ENCODE measurements at regions of chr20 and their contacts with region 1.

Region 1: GRCh38 chr20:32091888-32092346 is 17.6 kb upstream of the TM9SF4 start:
- DNase-seq: peak; percentile 58 to 84 (median 69)
- ATAC-seq: peak; percentile 99
- H3K4me3 ChIP-seq: no peak overlapping the region
- H3K4me3 Mint-ChIP-seq: no peak overlapping the region
- H3K27ac ChIP-seq: no peak overlapping the region
- H3K27ac Mint-ChIP-seq: no peak overlapping the region
- H3K4me1 ChIP-seq: peaks cover 4% of the 10 kb centered on the region
- H3K4me1 Mint-ChIP-seq: no peaks in the 10 kb centered on the region
- H3K27me3 ChIP-seq: no peaks in the 10 kb centered on the region
- H3K27me3 Mint-ChIP-seq: peaks cover 10% of the 10 kb centered on the region
- CTCF ChIP-seq: peak; percentile 89

Region 2: GRCh38 chr20:31822421-31823330 is 269.2 kb before region 1 on chr20:
- CTCF ChIA-PET with region 1: interaction called, 8 read pairs
- POLR2A ChIA-PET with region 1: no interaction called
- intact Hi-C with region 1: loop called (anchors 1 to 2 kb)
- DNase-seq: peak; percentile 60 to 86 (median 68)
- ATAC-seq: peak; percentile 86
- H3K4me3 ChIP-seq: peak overlapping the region; percentile 5
- H3K4me3 Mint-ChIP-seq: no peak overlapping the region
- H3K27ac ChIP-seq: no peak overlapping the region
- H3K27ac Mint-ChIP-seq: no peak overlapping the region
- H3K4me1 ChIP-seq: peaks cover 10% of the 10 kb centered on the region
- H3K4me1 Mint-ChIP-seq: no peaks in the 10 kb centered on the region
- H3K27me3 ChIP-seq: peaks cover 0 to 3% of the 10 kb centered on the region in 2 experiments
- H3K27me3 Mint-ChIP-seq: no peaks in the 10 kb centered on the region
- CTCF ChIP-seq: peak; percentile 99

Region 3: GRCh38 chr20:31849455-31849925 is 242.4 kb before region 1 on chr20:
- CTCF ChIA-PET with region 1: no interaction called
- POLR2A ChIA-PET with region 1: no interaction called
- intact Hi-C with region 1: loop called (anchors 1 to 10 kb)
- DNase-seq: no peak
- ATAC-seq: no peak
- H3K4me3 ChIP-seq: no peak overlapping the region
- H3K4me3 Mint-ChIP-seq: no peak overlapping the region
- H3K27ac ChIP-seq: no peak overlapping the region
- H3K27ac Mint-ChIP-seq: no peak overlapping the region
- H3K4me1 ChIP-seq: peaks cover 7% of the 10 kb centered on the region
- H3K4me1 Mint-ChIP-seq: no peaks in the 10 kb centered on the region
- H3K27me3 ChIP-seq: peaks cover 8 to 14% of the 10 kb centered on the region in 2 experiments
- H3K27me3 Mint-ChIP-seq: peaks cover 32% of the 10 kb centered on the region
- CTCF ChIP-seq: no peak

Region 4: DNA sequence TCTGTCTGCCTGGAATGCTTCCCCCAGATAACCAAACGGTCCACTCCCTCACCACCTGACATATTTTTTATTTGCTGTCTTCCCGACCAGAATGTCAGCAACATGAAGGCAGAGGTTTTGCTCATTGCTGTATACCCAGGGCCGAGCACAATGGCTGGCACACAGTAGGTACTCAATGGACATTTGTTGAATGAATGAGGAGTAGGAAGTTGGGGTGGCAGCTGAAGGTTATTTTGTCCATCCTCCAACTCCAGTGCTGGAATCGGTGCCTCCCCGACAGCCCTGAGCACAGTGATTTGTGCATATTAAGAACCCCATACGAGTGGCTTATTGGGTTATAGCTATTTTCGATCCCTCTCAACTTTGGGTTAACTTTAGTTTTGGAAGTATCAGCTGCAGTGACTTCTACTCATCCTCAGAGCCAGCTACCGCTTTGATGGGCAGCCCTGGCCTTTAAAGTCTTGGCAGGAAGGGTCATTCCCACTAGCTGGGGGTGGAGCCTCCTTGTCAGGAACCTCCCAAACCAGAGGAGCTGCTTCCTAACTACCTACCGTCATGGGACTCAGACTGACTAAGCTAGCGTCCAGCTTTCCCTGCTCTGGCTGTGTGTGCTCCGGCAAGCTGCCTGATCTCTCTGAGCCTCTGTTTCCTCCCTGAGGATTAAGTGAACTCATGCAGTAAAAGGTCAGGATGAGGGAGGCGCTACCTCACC is 231.8 kb before region 1 on chr20:
- CTCF ChIA-PET with region 1: no interaction called
- POLR2A ChIA-PET with region 1: no interaction called
- intact Hi-C with region 1: loop called in 1 of 2 experiments (anchors 10 kb)
- DNase-seq: no peak
- ATAC-seq: no peak
- H3K4me3 ChIP-seq: no peak overlapping the region
- H3K4me3 Mint-ChIP-seq: peak overlapping the region; percentile 38
- H3K27ac ChIP-seq: no peak overlapping the region
- H3K27ac Mint-ChIP-seq: no peak overlapping the region
- H3K4me1 ChIP-seq: peaks cover 22% of the 10 kb centered on the region
- H3K4me1 Mint-ChIP-seq: peaks cover 13% of the 10 kb centered on the region
- H3K27me3 ChIP-seq: peaks cover 43 to 46% of the 10 kb centered on the region in 2 experiments
- H3K27me3 Mint-ChIP-seq: peaks cover 7% of the 10 kb centered on the region
- CTCF ChIP-seq: no peak